ENCODE measurements at regions of chr17 and their contacts with region 1.

Region 1: DNA sequence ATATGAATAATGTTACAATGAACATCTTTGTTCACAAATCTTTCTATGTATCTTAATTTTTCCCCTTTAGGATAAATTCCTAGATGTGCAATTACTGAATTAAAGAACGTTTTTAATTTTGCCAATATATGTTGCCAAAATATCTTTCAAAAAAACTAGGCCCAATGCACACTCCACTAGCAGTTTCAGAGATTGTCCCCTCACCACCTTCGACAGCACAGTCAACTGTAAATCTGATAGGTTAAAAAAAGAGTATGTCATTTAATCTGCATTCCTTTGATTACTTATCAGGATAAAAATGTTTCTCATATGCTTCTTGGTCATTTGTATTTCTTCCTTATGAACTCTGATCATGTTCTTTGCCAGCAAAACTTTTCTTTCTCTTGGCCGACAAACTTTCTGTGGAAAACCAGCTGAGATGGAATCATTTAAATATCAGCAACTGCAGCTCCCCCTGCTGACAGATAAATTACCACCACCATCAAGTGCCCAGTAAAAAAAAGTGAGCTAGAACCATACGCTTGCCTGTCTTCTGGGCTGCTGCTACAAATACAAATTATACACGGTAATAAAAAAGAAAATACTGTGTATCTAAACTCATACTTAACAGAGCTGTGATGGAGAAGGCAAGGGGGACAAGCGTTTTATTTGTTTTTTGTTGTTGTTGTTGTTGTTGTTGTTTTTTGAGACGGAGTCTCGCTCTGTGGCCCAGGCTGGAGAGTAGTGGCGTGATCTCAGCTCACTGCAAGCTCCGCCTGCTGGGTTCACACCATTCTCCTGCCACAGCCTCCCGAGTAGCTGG is 19.6 kb upstream of the KANSL1 start:
- DNase-seq: peak; percentile 33 to 90 (median 63)
- ATAC-seq: peak; percentile 88
- H3K4me3 ChIP-seq: no peak overlapping the region
- H3K4me3 Mint-ChIP-seq: no peak overlapping the region
- H3K27ac ChIP-seq: no peak overlapping the region
- H3K27ac Mint-ChIP-seq: peak overlapping the region; percentile 38
- H3K4me1 ChIP-seq: peaks cover 14% of the 10 kb centered on the region
- H3K4me1 Mint-ChIP-seq: peaks cover 26% of the 10 kb centered on the region
- H3K27me3 ChIP-seq: no peaks in the 10 kb centered on the region
- H3K27me3 Mint-ChIP-seq: no peaks in the 10 kb centered on the region
- CTCF ChIP-seq: peak; percentile 85

Region 2: GRCh38 chr17:46002311-46002972 is 210.4 kb before region 1 on chr17:
- CTCF ChIA-PET with region 1: interaction called, 78 read pairs
- POLR2A ChIA-PET with region 1: interaction called, 6 read pairs
- intact Hi-C with region 1: loop called (anchors 1 kb)
- DNase-seq: peak; percentile 60 to 87 (median 76)
- ATAC-seq: peak; percentile 96
- H3K4me3 ChIP-seq: no peak overlapping the region
- H3K4me3 Mint-ChIP-seq: no peak overlapping the region
- H3K27ac ChIP-seq: no peak overlapping the region
- H3K27ac Mint-ChIP-seq: no peak overlapping the region
- H3K4me1 ChIP-seq: no peaks in the 10 kb centered on the region
- H3K4me1 Mint-ChIP-seq: no peaks in the 10 kb centered on the region
- H3K27me3 ChIP-seq: no peaks in the 10 kb centered on the region
- H3K27me3 Mint-ChIP-seq: peaks cover 3% of the 10 kb centered on the region
- CTCF ChIP-seq: peak; percentile 84

Region 3: GRCh38 chr17:46044286-46044928 is 168.4 kb before region 1 on chr17:
- CTCF ChIA-PET with region 1: interaction called, 67 read pairs
- POLR2A ChIA-PET with region 1: interaction called, 5 read pairs
- intact Hi-C with region 1: loop called (anchors 1 kb)
- DNase-seq: peak; percentile 12 to 76 (median 59)
- ATAC-seq: peak; percentile 56
- H3K4me3 ChIP-seq: no peak overlapping the region
- H3K4me3 Mint-ChIP-seq: no peak overlapping the region
- H3K27ac ChIP-seq: no peak overlapping the region
- H3K27ac Mint-ChIP-seq: peak overlapping the region; percentile 56
- H3K4me1 ChIP-seq: no peaks in the 10 kb centered on the region
- H3K4me1 Mint-ChIP-seq: peaks cover 16% of the 10 kb centered on the region
- H3K27me3 ChIP-seq: no peaks in the 10 kb centered on the region
- H3K27me3 Mint-ChIP-seq: no peaks in the 10 kb centered on the region
- CTCF ChIP-seq: peak; percentile 81

Region 4: GRCh38 chr17:46061435-46061834 is 151.4 kb before region 1 on chr17:
- CTCF ChIA-PET with region 1: interaction called, 6 read pairs
- POLR2A ChIA-PET with region 1: no interaction called
- intact Hi-C with region 1: loop called in 1 of 2 experiments (anchors 5 kb)
- DNase-seq: peak in 1 of 9 experiments; percentile 25
- ATAC-seq: no peak
- H3K4me3 ChIP-seq: no peak overlapping the region
- H3K4me3 Mint-ChIP-seq: no peak overlapping the region
- H3K27ac ChIP-seq: no peak overlapping the region
- H3K27ac Mint-ChIP-seq: no peak overlapping the region
- H3K4me1 ChIP-seq: no peaks in the 10 kb centered on the region
- H3K4me1 Mint-ChIP-seq: peaks cover 25% of the 10 kb centered on the region
- H3K27me3 ChIP-seq: no peaks in the 10 kb centered on the region
- H3K27me3 Mint-ChIP-seq: no peaks in the 10 kb centered on the region
- CTCF ChIP-seq: peak; percentile 51

Region 5: DNA sequence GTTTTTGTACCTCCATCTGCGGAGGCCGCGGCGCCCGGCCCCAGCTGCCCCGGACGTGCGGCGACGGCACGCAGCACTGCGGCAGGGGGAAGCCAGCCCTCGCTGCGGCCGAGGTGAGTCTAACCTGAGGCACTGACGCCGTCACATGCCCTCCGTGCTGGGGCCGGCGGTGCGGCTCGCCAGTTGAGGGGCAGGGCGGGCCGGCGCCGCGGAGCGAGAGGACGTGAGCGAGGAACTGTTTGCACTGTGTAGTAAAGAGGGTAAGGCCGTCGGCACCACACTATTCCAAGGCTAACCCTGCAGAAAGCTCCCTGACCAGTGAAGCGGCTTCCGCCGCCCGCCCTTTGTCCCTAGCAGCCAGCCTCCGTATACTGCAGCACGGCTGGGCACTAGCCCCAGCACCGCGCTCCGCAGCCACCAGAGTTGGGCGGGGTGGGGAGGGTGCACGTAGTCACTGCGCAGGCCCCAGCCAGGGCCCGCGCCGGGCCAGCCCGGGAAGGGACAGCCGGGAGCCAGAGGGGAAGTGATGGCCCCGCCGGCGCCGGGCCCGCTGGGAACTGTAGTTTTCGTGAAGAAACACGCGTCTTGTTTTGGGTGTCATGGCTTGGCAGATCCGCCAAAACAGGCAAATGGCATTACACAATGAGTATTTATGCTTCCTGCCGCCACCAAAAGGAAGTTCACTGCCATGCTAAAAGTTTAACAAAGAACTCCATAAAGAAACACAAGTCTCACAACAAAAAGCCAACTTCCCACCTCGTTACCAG is 19.0 kb before region 1 on chr17:
- CTCF ChIA-PET with region 1: interaction called, 25 read pairs
- POLR2A ChIA-PET with region 1: interaction called, 25 read pairs
- intact Hi-C with region 1: loop called (anchors 1 kb)
- DNase-seq: peak; percentile 90 to 96 (median 93)
- ATAC-seq: peak; percentile 65
- H3K4me3 ChIP-seq: peak overlapping the region; percentile 90 to 91
- H3K4me3 Mint-ChIP-seq: peak overlapping the region; percentile 88
- H3K27ac ChIP-seq: peak overlapping the region; percentile 96 to 100
- H3K27ac Mint-ChIP-seq: peak overlapping the region; percentile 92
- H3K4me1 ChIP-seq: peaks cover 60% of the 10 kb centered on the region
- H3K4me1 Mint-ChIP-seq: peaks cover 60% of the 10 kb centered on the region
- H3K27me3 ChIP-seq: no peaks in the 10 kb centered on the region
- H3K27me3 Mint-ChIP-seq: no peaks in the 10 kb centered on the region
- CTCF ChIP-seq: peak; percentile 46

Region 6: GRCh38 chr17:47720754-47721533 is 1508.1 kb after region 1 on chr17:
- CTCF ChIA-PET with region 1: no interaction called
- POLR2A ChIA-PET with region 1: no interaction called
- intact Hi-C with region 1: no loop called
- DNase-seq: peak in 8 of 9 experiments; percentile 62 to 84 (median 75)
- ATAC-seq: peak; percentile 70
- H3K4me3 ChIP-seq: peak overlapping the region in 1 of 2 experiments; percentile 33
- H3K4me3 Mint-ChIP-seq: peak overlapping the region; percentile 53
- H3K27ac ChIP-seq: peak overlapping the region in 1 of 2 experiments; percentile 76
- H3K27ac Mint-ChIP-seq: peak overlapping the region; percentile 70
- H3K4me1 ChIP-seq: peaks cover 62% of the 10 kb centered on the region
- H3K4me1 Mint-ChIP-seq: peaks cover 58% of the 10 kb centered on the region
- H3K27me3 ChIP-seq: no peaks in the 10 kb centered on the region
- H3K27me3 Mint-ChIP-seq: no peaks in the 10 kb centered on the region
- CTCF ChIP-seq: no peak

Measured in CD8-positive, alpha-beta T cell (primary cell).